GM12878 (cell line): ENCODE measurements at regions of chr12 and their contacts with region 1.

Region 1: GRCh38 chr12:48924617-48925303 is 532 bp downstream of the FKBP11 start:
- DNase-seq: peak; percentile 40
- ATAC-seq: peak; percentile 92
- H3K4me3 ChIP-seq: peak overlapping the region; percentile 98
- H3K27ac ChIP-seq: peak overlapping the region; percentile 90
- H3K4me1 ChIP-seq: peaks cover 22% of the 10 kb centered on the region
- H3K27me3 ChIP-seq: no peaks in the 10 kb centered on the region
- CTCF ChIP-seq: peak; percentile 88 to 95 (median 93)
- EP300 ChIP-seq: no peak
- POLR2A ChIP-seq: no peak
- RAD21 ChIP-seq: peak; percentile 88

Region 2: GRCh38 chr12:48910196-48910595 is 14.6 kb before region 1 on chr12:
- CTCF ChIA-PET with region 1: interaction called, 13 read pairs
- POLR2A ChIA-PET with region 1: interaction called, 3 read pairs
- RAD21 ChIA-PET with region 1: interaction called, 3 read pairs
- SMC1A ChIA-PET with region 1: interaction called, 4 read pairs
- in situ Hi-C with region 1: no loop called
- intact Hi-C with region 1: no loop called
- DNase-seq: no peak
- ATAC-seq: no peak
- H3K4me3 ChIP-seq: no peak overlapping the region
- H3K27ac ChIP-seq: no peak overlapping the region
- H3K4me1 ChIP-seq: no peaks in the 10 kb centered on the region
- H3K27me3 ChIP-seq: no peaks in the 10 kb centered on the region
- CTCF ChIP-seq: no peak
- EP300 ChIP-seq: no peak
- POLR2A ChIP-seq: no peak
- RAD21 ChIP-seq: no peak

Region 3: GRCh38 chr12:48936379-48936979 is 11.7 kb after region 1 on chr12:
- CTCF ChIA-PET with region 1: interaction called, 41 read pairs
- POLR2A ChIA-PET with region 1: interaction called, 3 read pairs
- RAD21 ChIA-PET with region 1: interaction called, 5 read pairs
- SMC1A ChIA-PET with region 1: interaction called, 21 read pairs
- in situ Hi-C with region 1: no loop called
- intact Hi-C with region 1: no loop called
- DNase-seq: no peak
- ATAC-seq: peak; percentile 95
- H3K4me3 ChIP-seq: no peak overlapping the region
- H3K27ac ChIP-seq: no peak overlapping the region
- H3K4me1 ChIP-seq: no peaks in the 10 kb centered on the region
- H3K27me3 ChIP-seq: no peaks in the 10 kb centered on the region
- CTCF ChIP-seq: peak; percentile 83 to 95 (median 90)
- EP300 ChIP-seq: no peak
- POLR2A ChIP-seq: no peak
- RAD21 ChIP-seq: peak; percentile 62

Region 4: DNA sequence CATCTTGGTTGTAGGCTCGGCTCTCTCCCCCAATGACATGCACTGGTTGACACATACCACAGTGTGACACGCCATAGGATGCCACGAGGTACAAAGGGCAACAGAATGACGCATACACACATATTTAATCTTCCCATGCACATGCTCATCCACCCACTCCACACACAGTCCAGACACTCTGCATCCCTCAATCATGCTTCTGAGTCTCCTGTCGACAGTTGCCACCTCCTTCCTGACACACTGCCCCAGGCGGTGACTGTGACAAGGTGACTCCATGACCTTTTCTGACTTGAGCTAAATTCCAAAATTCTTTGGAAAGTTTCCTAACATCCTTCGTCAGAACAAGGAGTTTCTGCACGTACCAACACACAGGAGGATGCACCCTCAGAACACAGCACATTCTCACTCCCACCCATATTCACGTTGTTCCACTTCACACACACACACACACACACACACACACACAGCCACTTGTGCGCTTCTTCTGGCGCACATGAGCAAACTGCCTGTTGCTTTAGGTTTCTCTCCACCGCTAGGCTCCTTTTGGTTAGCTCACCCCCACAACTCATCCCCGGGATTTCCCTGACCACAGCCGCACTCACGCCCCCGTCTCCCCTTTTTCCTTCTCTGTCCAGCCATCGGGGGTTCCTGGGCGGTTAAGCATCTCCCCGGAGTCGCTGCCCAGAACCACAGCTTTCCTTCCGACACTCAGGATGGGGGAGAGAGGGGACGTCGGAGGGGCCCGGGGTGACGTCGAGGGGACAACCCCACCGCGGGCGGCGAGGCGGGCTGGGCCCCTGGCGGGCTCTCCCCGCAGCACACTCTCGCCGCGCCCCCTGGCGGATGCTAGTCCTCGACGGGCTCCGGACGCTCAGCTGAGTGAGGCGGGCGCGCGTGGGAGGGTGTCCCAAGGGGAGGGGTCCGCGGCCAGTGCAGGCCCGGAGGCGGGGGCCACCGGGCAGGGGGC is 52.8 kb after region 1 on chr12:
- CTCF ChIA-PET with region 1: interaction called, 93 read pairs
- POLR2A ChIA-PET with region 1: interaction called, 5 read pairs
- RAD21 ChIA-PET with region 1: interaction called, 10 read pairs
- SMC1A ChIA-PET with region 1: interaction called, 13 read pairs
- in situ Hi-C with region 1: no loop called
- intact Hi-C with region 1: loop called (anchors 2 kb)
- DNase-seq: no peak
- ATAC-seq: peak; percentile 84
- H3K4me3 ChIP-seq: no peak overlapping the region; the same call in 1 of the 2 replicates
- H3K27ac ChIP-seq: no peak overlapping the region
- H3K4me1 ChIP-seq: peaks cover 35% of the 10 kb centered on the region
- H3K27me3 ChIP-seq: peaks cover 37 to 44% of the 10 kb centered on the region in 2 experiments
- CTCF ChIP-seq: peak; percentile 61 to 82 (median 70); a peak in 5 of 6 replicates
- EP300 ChIP-seq: no peak; a peak in 1 of 4 replicates
- POLR2A ChIP-seq: no peak
- RAD21 ChIP-seq: peak; percentile 50

Region 5: DNA sequence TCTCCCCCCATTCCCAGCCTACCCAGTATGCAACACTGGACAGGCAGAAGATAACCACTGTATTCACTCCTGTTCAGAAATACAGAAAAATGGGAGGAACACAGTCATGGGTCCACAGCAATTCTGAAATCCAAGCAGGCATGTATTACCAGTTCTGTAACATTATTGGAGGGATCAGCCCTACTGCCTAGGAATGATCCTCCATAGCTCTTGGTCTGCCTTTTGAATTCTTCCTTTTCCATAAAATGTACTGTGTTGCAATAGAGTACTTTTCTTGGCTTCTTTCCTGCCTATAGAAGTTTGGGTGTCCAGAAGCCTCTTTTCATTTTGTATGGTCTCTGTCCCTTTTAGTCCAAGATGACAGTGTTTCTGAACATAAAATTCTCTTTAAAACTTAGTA is 489.0 kb after region 1 on chr12:
- CTCF ChIA-PET with region 1: no interaction called
- POLR2A ChIA-PET with region 1: no interaction called
- RAD21 ChIA-PET with region 1: no interaction called
- SMC1A ChIA-PET with region 1: no interaction called
- in situ Hi-C with region 1: no loop called
- intact Hi-C with region 1: no loop called
- DNase-seq: no peak
- ATAC-seq: no peak
- H3K4me3 ChIP-seq: no peak overlapping the region
- H3K27ac ChIP-seq: no peak overlapping the region
- H3K4me1 ChIP-seq: peaks cover 4% of the 10 kb centered on the region
- H3K27me3 ChIP-seq: no peaks in the 10 kb centered on the region
- CTCF ChIP-seq: no peak
- EP300 ChIP-seq: no peak
- POLR2A ChIP-seq: no peak
- RAD21 ChIP-seq: no peak